A549 (cell line): ENCODE measurements at regions of chr16 and their contacts with region 1.

Region 1: GRCh38 chr16:1194665-1195392 is 30.2 kb downstream of the TPSG1 start:
- DNase-seq: no peak
- ATAC-seq: peak; percentile 21 to 65; a peak in 3 of 6 replicates
- H3K4me3 ChIP-seq: no peak overlapping the region
- H3K27ac ChIP-seq: peak overlapping the region in 1 of 2 experiments; percentile 57; a peak in 3 of 6 replicates
- H3K4me1 ChIP-seq: peaks cover 27% of the 10 kb centered on the region
- CTCF ChIP-seq: peak; percentile 89
- EP300 ChIP-seq: no peak
- POLR2A ChIP-seq: no peak
- RAD21 ChIP-seq: peak; percentile 83 to 95

Region 2: DNA sequence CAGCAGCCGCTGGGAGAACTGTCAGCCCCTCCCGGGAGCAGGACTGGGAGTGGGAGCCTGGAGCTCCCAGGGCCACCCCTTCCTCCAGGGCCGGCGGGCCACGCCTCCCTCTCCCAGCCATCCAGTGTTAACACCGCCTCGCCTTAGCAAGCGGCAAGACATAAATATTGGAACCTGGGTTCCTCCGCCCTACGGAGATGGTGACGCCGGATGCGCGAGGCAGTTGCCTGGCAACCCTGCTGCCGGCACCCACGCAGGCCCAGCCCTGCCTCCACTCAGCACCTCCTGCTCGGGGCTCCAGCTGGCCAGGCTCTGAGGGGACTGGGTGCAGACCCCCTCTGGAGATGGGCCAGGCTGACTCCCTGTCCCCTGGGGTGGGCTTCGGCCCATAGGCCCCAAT is 69.4 kb before region 1 on chr16:
- CTCF ChIA-PET with region 1: interaction called, 10 read pairs
- POLR2A ChIA-PET with region 1: no interaction called
- DNase-seq: peak in 1 of 2 experiments; percentile 66
- ATAC-seq: peak; percentile 22 to 77; a peak in 3 of 6 replicates
- H3K4me3 ChIP-seq: no peak overlapping the region
- H3K27ac ChIP-seq: no peak overlapping the region
- H3K4me1 ChIP-seq: no peaks in the 10 kb centered on the region
- CTCF ChIP-seq: no peak
- EP300 ChIP-seq: no peak
- POLR2A ChIP-seq: no peak
- RAD21 ChIP-seq: no peak

Region 3: DNA sequence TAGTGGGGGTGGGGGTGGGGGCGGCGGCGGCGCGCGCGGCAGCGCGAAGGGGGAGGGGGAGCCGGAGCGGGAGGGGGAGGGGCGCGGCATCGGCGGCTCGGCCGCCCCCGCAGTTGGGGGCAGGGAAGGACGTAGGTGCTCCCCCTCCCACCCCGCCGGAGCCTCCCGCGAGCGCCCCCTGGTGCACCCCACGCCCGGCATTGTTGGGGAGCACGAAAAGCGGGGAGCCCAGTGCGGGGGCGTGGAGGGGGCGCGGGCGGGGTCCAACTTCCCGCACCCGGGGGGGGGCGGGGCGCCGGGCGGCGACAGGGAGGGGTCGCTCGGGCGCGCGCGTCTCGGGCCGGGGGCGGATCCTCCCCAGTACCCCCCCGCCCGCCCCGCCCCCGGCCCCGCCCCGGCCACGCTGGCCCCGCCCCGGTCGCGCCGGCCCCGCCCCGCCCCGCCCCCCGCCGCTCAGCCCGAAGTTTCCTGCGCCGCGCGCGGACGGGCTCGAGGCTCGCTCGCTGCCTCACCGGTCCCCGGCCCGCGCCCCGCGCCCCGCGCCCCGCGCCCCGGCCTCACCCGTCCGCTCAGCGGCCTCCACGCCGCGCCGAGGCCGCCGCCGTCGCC is 42.1 kb before region 1 on chr16 and contains the start of gene CACNA1H:
- CTCF ChIA-PET with region 1: interaction called, 33 read pairs
- POLR2A ChIA-PET with region 1: no interaction called
- DNase-seq: peak in 1 of 2 experiments; percentile 58
- ATAC-seq: peak in 1 of 2 experiments; percentile 17; a peak in 1 of 6 replicates
- H3K4me3 ChIP-seq: peak within 1 kb of the TSS; percentile 53
- H3K27ac ChIP-seq: peak within 1 kb of the TSS; percentile 87 to 96
- H3K4me1 ChIP-seq: peaks cover 36% of the 10 kb centered on the region
- CTCF ChIP-seq: peak; percentile 74
- EP300 ChIP-seq: no peak
- POLR2A ChIP-seq: peak; percentile 22; the same call in 1 of the 2 replicates
- RAD21 ChIP-seq: 0 out of 5 replicates have a peak, but pooled peaks of 1 of the 2 experiments have one; percentile 19
- polyA plus RNA-seq, gene CACNA1H: 7.2 and 8.6 TPM in 2 replicates

Region 4: DNA sequence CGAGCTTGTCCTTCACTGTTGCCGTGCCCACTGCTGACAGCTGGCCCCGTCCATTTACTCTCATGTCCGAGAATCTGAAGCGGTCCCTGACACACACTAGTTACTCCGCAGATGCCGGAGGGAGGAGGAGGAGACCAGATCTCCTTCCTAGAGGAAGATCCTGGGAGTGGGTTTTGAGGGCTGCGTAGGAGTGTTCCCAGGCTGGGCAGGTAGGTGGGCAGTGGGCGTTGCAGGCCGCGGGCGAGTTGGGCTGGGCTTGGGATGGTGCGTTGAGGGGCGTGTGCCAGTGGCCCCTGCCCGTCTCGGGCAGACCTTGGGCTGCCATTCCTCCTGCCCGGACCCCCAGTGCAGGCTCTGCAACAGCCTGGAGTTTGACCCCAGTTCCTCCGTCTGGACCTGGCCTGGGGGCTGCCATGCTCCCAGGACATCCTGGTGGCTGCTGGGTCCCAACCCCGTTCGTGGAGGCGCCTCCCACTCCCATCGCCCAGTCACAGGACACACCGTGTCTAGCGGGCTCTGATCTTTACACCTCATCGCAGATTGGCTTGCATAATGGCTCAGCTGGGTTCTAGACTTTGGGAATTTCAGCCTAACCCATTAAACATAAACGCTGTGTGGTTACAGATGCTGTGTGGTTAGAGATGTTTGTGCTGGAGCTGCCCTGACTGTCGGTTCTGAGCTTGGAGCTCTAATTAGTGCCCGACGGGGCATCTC is 19.1 kb before region 1 on chr16:
- CTCF ChIA-PET with region 1: interaction called, 53 read pairs
- POLR2A ChIA-PET with region 1: no interaction called
- DNase-seq: no peak
- ATAC-seq: no peak
- H3K4me3 ChIP-seq: no peak overlapping the region
- H3K27ac ChIP-seq: peak overlapping the region; percentile 76 to 92; a peak in 5 of 6 replicates
- H3K4me1 ChIP-seq: peaks cover 45% of the 10 kb centered on the region
- CTCF ChIP-seq: no peak
- EP300 ChIP-seq: no peak
- POLR2A ChIP-seq: no peak
- RAD21 ChIP-seq: no peak

Region 5: GRCh38 chr16:1208239-1208830 is 13.5 kb after region 1 on chr16:
- CTCF ChIA-PET with region 1: interaction called, 13 read pairs
- POLR2A ChIA-PET with region 1: no interaction called
- DNase-seq: no peak
- ATAC-seq: peak in 1 of 2 experiments; percentile 8; a peak in 2 of 6 replicates
- H3K4me3 ChIP-seq: no peak overlapping the region
- H3K27ac ChIP-seq: no peak overlapping the region
- H3K4me1 ChIP-seq: no peaks in the 10 kb centered on the region
- CTCF ChIP-seq: no peak
- EP300 ChIP-seq: no peak
- POLR2A ChIP-seq: no peak
- RAD21 ChIP-seq: no peak